ENCODE measurements at regions of chr7 and their contacts with region 1.

Region 1: DNA sequence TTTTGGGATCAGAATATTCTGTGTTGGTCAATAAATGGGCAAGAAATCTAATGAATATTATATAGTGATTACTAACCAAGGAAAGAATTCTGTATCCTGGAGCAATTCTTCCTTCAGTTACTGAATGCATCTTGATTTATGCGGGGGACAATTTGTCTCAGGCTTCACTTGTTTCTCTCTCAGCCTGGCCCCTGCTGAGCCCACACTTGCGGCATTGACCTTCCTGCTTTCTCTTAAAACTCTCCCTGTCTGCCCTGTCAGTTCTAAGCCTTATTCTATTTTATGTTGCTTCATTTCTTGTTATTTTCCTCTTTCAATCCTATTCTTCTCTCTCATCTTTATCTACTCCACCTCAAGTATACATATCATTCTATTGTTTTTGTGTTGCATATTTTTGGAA is 122.1 kb upstream of the TPK1 start:
- DNase-seq: no peak
- ATAC-seq: no peak
- H3K4me3 ChIP-seq: no peak overlapping the region
- H3K27ac ChIP-seq: no peak overlapping the region
- H3K4me1 ChIP-seq: no peaks in the 10 kb centered on the region
- H3K27me3 ChIP-seq: no peaks in the 10 kb centered on the region

Region 2: GRCh38 chr7:144481833-144482232 is 476.2 kb before region 1 on chr7:
- intact Hi-C with region 1: loop called in 1 of 2 experiments (anchors 10 kb)
- DNase-seq: no peak
- ATAC-seq: no peak
- H3K4me3 ChIP-seq: no peak overlapping the region
- H3K27ac ChIP-seq: peak overlapping the region in 1 of 2 donors; percentile 57
- H3K4me1 ChIP-seq: no peaks in the 10 kb centered on the region
- H3K27me3 ChIP-seq: no peaks in the 10 kb centered on the region